AG04449 (cell line): ENCODE measurements at regions of chr6 and their contacts with region 1.

Region 1: GRCh38 chr6:5030596-5031136 is 26.8 kb upstream of the RPP40 start:
- DNase-seq: no peak
- H3K4me3 ChIP-seq: no peak overlapping the region
- CTCF ChIP-seq: peak; percentile 74

Region 2: GRCh38 chr6:4313044-4313686 is 717.5 kb before region 1 on chr6:
- CTCF ChIA-PET with region 1: interaction called, 10 read pairs
- POLR2A ChIA-PET with region 1: no interaction called
- DNase-seq: peak; percentile 85
- H3K4me3 ChIP-seq: peak overlapping the region; percentile 28
- CTCF ChIP-seq: peak; percentile 40

Region 3: DNA sequence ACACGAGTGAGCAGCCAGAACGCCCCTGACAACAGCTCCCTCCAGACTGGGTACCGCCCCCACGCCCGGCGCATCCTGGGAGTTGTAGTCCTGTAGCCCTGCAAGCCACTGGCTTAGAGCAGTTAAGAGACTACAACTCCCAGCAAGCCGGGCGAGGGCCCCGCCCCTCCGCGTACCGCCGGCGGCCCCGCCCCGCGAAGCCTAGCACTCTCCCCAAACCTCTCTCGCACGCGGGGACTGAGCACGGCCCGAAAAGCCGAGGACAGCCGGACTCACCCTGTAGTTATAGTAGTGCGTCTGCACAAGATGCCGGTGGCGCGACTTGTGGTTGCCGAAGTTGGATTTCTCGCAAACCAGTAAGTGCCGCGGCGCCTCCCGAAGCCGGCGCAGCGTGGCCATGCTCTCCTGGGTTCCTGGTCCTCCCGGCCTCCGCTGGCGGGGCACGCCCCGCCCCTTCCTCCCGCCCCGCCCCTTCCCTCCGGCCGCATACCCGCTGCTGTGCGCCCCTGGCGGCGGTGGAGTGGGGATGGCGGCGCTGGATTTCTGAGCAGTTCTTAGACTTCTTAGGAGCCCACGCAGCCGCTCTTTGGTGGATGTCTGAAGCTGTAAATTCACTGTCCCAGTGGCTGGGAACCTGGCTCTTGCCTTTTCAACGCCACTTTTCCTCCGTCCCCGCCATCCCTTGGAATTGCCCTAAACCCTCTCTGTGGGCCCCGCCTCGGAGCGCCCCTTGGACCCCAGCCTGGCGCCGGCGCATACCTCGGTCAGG is 26.9 kb before region 1 on chr6 and contains the start of gene RPP40:
- CTCF ChIA-PET with region 1: interaction called, 16 read pairs
- POLR2A ChIA-PET with region 1: no interaction called
- DNase-seq: peak; percentile 73
- H3K4me3 ChIP-seq: peak within 1 kb of the TSS; percentile 90
- CTCF ChIP-seq: peak; percentile 86

Region 4: GRCh38 chr6:5020142-5020541 is 10.5 kb before region 1 on chr6:
- CTCF ChIA-PET with region 1: interaction called, 18 read pairs
- POLR2A ChIA-PET with region 1: no interaction called
- DNase-seq: no peak
- H3K4me3 ChIP-seq: no peak overlapping the region
- CTCF ChIP-seq: no peak

Region 5: GRCh38 chr6:5044866-5045265 is 14.2 kb after region 1 on chr6:
- CTCF ChIA-PET with region 1: interaction called, 32 read pairs
- POLR2A ChIA-PET with region 1: no interaction called
- DNase-seq: no peak
- H3K4me3 ChIP-seq: no peak overlapping the region
- CTCF ChIP-seq: no peak

Region 6: GRCh38 chr6:5053038-5053437 is 22.4 kb after region 1 on chr6:
- CTCF ChIA-PET with region 1: interaction called, 20 read pairs
- POLR2A ChIA-PET with region 1: no interaction called
- DNase-seq: no peak
- H3K4me3 ChIP-seq: no peak overlapping the region
- CTCF ChIP-seq: no peak

Region 7: GRCh38 chr6:5395719-5396118 is 365.1 kb after region 1 on chr6:
- CTCF ChIA-PET with region 1: no interaction called
- POLR2A ChIA-PET with region 1: no interaction called
- DNase-seq: no peak
- H3K4me3 ChIP-seq: no peak overlapping the region
- CTCF ChIP-seq: no peak